Activated CD8-positive, alpha-beta memory T cell treated with anti-CD3 and anti-CD28 coated beads, Interleukin-2, amount 10 ng/mL, durations not matched to agents 7 days and 5 days (primary cell): ENCODE measurements at regions of chr11 and their contacts with region 1.

Region 1: GRCh38 chr11:68297812-68298658 is 14.4 kb upstream of the LRP5 start:
- DNase-seq: peak; percentile 80
- ATAC-seq: peak; percentile 98
- H3K4me3 Mint-ChIP-seq: no peak overlapping the region
- H3K27ac Mint-ChIP-seq: no peak overlapping the region
- H3K4me1 Mint-ChIP-seq: peaks cover 4% of the 10 kb centered on the region
- H3K27me3 Mint-ChIP-seq: peaks cover 11% of the 10 kb centered on the region

Region 2: GRCh38 chr11:68251765-68252164 is 46.3 kb before region 1 on chr11:
- CTCF ChIA-PET with region 1: interaction called, 199 read pairs
- DNase-seq: no peak
- ATAC-seq: no peak
- H3K4me3 Mint-ChIP-seq: no peak overlapping the region
- H3K27ac Mint-ChIP-seq: no peak overlapping the region
- H3K4me1 Mint-ChIP-seq: peaks cover 5% of the 10 kb centered on the region
- H3K27me3 Mint-ChIP-seq: no peaks in the 10 kb centered on the region

Region 3: DNA sequence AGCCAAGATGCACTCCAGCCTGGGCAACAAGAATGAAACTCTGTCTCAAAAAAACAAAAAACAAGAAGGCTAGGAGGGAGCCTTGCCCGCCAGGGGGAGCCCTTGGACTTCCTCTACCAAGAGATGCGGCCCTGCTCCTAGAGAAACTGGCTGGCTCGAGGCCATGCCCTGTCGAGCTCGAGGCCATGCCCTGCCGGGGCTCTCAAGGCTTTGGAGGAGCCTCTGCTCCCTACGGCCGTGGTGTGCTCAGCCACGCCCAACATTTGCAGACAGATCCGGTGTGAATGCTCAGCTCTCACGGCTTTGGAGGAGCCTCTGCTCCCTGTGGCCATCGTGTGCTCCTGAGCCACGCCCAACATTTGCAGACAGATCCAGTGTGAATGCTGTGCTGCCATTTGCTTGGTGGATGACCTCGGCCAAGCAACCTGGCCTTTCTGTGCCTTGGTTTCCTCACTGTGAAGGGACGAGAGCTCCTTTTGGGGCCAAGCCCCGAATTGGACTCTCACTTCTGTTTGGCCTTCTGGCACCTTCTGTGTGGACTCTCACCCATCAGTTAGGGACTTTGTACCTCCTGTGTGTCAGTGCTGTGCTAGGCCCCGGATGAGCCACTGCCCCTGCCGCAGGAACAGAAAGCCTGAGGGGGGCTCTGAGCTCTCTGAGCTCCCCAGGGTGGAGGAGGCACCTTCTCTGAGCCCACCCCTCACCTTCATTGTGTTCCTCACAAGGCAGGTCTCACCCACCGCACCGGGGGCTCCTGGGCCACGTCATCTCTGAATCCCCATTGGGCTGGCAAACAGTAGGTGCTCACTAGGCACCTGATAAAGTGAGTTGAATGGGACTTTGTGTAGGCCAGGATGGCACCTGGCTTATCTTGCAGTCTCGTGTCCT is 40.3 kb before region 1 on chr11:
- CTCF ChIA-PET with region 1: interaction called, 199 read pairs
- DNase-seq: peak; percentile 95
- ATAC-seq: peak; percentile 97
- H3K4me3 Mint-ChIP-seq: no peak overlapping the region
- H3K27ac Mint-ChIP-seq: peak overlapping the region; percentile 16
- H3K4me1 Mint-ChIP-seq: peaks cover 5% of the 10 kb centered on the region
- H3K27me3 Mint-ChIP-seq: no peaks in the 10 kb centered on the region

Region 4: GRCh38 chr11:68266121-68266891 is 31.7 kb before region 1 on chr11:
- CTCF ChIA-PET with region 1: interaction called, 199 read pairs
- DNase-seq: no peak
- ATAC-seq: no peak
- H3K4me3 Mint-ChIP-seq: no peak overlapping the region
- H3K27ac Mint-ChIP-seq: peak overlapping the region; percentile 31
- H3K4me1 Mint-ChIP-seq: peaks cover 32% of the 10 kb centered on the region
- H3K27me3 Mint-ChIP-seq: no peaks in the 10 kb centered on the region

Region 5: DNA sequence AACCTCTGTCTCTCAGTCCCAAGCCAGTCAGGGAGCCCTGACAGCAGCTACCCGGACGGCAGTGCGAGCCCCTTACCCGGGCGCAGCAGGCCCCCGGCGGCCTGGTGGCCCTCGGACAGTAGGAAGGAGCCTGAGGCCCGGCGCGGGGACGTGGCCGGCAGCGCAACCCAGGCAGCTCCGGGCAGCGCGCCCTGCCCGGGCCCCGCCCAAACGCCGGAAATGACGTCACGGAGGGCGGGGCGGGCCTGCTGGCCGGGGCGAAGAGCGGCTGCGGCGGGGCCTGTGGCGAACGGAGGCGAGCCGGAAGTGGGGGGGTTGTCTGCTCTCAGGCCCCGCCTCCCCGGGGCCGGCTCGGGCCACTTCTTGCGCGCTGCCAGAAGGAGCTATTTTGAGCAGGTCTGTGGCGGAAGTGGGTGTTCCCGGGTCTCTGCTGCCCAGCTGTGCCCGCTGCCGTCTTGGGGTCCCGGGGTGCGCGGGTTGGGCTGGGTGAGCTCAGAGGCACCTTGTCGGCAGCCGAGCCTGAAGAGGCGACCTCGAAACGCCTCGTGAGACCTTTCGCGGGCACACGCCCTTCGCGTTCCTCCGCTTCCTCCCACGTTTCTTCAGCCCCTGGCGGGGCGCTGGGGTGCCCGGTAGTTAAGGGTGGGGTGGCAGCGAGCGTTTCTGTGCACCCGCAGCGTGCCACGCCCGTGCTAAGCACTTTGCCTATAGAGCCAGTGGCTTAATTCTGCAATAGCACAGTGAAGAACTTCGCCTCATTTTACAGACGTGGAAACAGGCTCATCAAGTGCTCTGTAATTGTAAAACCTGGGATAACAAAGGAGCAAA is 26.0 kb before region 1 on chr11 and contains the start of gene C11orf24:
- CTCF ChIA-PET with region 1: interaction called, 78 read pairs
- DNase-seq: peak; percentile 94
- ATAC-seq: peak; percentile 92
- H3K4me3 Mint-ChIP-seq: peak within 1 kb of the TSS; percentile 81
- H3K27ac Mint-ChIP-seq: peak within 1 kb of the TSS; percentile 96
- H3K4me1 Mint-ChIP-seq: peaks cover 42% of the 10 kb centered on the region
- H3K27me3 Mint-ChIP-seq: no peaks in the 10 kb centered on the region
- total RNA-seq, gene C11orf24: 26.4 to 27.0 TPM

Region 6: DNA sequence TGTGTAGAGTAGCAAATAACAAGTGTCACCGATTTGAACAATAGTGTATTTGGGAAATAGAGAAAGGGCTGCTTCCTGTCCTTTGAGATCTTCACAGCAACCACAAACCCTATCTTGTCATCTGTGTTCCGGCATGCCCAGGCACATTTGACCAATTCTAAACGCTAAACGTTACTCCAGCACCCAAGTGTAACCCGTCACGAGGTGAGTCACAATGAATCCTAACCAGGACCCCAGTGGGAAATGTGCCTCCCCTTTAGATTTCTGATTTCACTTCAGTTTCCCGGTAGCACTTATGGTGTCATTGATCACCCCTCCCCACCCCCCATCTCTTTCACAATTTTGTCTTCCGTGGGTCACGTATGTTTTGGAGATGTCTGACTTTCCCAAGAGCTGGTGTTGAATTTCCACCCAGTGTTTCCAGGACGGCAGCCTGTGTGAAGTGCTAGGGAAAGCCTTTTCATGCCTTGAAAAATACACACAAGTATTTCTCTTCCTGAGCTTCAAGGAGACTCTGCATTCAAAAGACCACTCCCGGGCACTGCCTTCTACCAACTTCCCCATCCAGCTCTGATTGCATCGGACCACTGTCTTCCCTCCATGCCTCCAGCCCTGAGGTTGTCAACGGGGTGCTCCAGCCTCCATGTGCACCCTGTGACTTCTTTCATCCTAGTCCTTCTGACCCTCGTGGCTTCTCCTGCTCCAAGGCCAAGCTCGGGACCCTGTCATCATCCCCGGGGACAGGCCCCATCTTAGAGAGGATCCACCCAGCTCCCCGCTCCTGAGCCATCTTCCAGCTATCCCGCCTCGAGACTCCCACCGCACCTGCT is 15.7 kb before region 1 on chr11:
- CTCF ChIA-PET with region 1: interaction called, 24 read pairs
- DNase-seq: peak; percentile 81
- ATAC-seq: peak; percentile 91
- H3K4me3 Mint-ChIP-seq: peak overlapping the region; percentile 55
- H3K27ac Mint-ChIP-seq: peak overlapping the region; percentile 86
- H3K4me1 Mint-ChIP-seq: peaks cover 26% of the 10 kb centered on the region
- H3K27me3 Mint-ChIP-seq: no peaks in the 10 kb centered on the region

Region 7: GRCh38 chr11:68383976-68384501 is 86.0 kb after region 1 on chr11:
- CTCF ChIA-PET with region 1: interaction called, 26 read pairs
- DNase-seq: peak; percentile 77
- ATAC-seq: peak; percentile 39
- H3K4me3 Mint-ChIP-seq: no peak overlapping the region
- H3K27ac Mint-ChIP-seq: no peak overlapping the region
- H3K4me1 Mint-ChIP-seq: peaks cover 26% of the 10 kb centered on the region
- H3K27me3 Mint-ChIP-seq: peaks cover 9% of the 10 kb centered on the region

Region 8: GRCh38 chr11:68398995-68399851 is 101.2 kb after region 1 on chr11:
- CTCF ChIA-PET with region 1: no interaction called
- DNase-seq: no peak
- ATAC-seq: no peak
- H3K4me3 Mint-ChIP-seq: no peak overlapping the region
- H3K27ac Mint-ChIP-seq: no peak overlapping the region
- H3K4me1 Mint-ChIP-seq: no peaks in the 10 kb centered on the region
- H3K27me3 Mint-ChIP-seq: no peaks in the 10 kb centered on the region